Activated CD4-positive, alpha-beta memory T cell treated with anti-CD3 and anti-CD28 coated beads, Interleukin-2, amount 10 ng/mL, durations not matched to agents 7 days and 5 days (primary cell): ENCODE measurements at regions of chr14 and their contacts with region 1.

Region 1: GRCh38 chr14:55388160-55388559 is 23.5 kb downstream of the ATG14 start:
- DNase-seq: no peak
- H3K4me3 Mint-ChIP-seq: no peak overlapping the region
- H3K27ac Mint-ChIP-seq: no peak overlapping the region
- H3K4me1 Mint-ChIP-seq: peaks cover 37% of the 10 kb centered on the region
- H3K27me3 Mint-ChIP-seq: no peaks in the 10 kb centered on the region

Region 2: DNA sequence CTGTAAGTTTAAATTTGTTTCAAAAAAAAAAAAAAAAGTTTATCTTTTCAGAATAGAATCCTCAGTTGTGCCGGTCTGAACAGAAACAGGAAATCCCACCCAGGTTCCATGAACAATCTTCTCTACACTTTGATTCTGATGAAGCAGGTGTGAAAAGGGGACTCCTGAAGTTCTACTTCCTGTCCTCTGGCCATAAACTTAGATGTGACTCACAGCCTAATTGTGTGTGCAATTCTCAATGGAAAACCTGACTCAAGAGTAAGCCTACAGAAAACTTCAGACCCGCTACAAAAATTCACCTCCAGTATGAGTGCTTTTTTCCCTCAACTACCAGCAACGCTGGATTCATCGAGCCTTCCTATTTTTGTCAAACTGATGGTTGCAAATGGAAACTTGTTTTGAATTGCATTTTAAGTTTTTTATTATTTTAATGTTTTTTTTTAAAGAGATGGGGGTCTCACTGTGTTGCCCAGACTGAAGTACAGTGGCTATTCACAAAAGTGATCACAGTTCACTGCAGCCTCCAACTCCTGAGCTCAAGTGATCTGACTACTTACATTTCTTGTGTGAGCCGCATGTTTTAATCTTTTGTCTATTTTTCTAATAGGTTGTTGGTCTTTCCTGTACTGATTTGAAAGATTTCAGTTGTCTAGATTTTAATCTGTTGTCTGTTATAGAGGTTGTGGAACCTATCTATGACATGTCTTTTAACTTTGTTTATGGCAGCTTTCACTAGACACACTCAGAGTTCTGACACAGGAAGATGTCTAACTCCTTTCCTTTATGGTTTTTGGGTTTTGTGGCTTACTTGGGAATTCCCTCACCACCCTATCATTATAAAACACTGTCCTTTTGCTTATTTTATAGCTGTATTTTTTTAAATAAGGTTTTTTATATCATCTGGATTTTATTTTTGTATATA is 14.1 kb before region 1 on chr14:
- CTCF ChIA-PET with region 1: interaction called, 4 read pairs
- POLR2A ChIA-PET with region 1: interaction called, 15 read pairs
- DNase-seq: peak; percentile 25
- H3K4me3 Mint-ChIP-seq: no peak overlapping the region
- H3K27ac Mint-ChIP-seq: peak overlapping the region; percentile 58
- H3K4me1 Mint-ChIP-seq: peaks cover 22% of the 10 kb centered on the region
- H3K27me3 Mint-ChIP-seq: no peaks in the 10 kb centered on the region

Region 3: DNA sequence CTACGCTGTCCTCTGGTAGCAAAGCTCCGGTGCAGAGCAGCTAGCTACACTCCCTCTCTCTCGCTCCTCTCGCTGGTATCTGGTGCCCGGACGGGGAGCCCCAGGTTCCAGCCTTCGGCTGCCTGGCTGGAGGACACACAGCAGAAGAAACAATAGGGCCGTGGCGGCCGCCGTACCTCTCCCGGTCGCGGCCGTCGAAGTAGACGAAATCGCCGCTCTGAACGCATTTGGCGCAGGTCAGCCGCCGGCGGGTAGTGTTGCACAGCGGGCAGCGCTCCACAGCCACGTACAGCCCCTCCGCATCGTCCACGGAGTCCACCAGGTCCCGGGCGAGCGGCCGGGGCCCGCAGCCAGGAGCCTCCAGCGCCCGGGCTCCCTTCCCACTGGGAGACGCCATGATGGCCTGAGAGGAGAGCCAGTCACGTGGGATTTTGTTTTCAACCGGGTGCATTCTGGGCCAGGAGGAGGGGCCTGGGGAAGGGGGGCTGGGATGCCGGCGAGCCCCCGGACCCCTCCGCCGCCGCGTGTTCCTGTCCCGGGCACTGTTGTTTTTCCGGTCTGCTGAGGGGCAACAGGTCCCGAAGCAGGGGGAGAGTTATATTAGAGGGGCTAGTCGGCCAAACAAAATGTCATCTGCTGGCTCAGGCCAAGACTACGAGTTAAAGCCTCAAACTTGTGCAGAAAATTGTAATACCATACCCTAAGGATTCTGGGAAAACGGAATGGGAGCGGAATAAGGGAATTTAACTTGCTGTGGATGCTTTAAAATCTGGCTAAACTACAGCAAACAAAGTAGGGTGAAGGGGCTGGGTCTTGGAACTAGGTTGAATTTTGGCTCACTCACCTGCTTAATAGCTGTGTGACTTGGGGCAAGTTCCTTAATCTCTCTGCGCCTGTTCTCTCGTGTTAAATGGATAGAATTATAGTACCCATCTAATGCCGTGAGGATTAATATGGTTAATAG is 23.5 kb after region 1 on chr14 and contains the start of gene ATG14:
- CTCF ChIA-PET with region 1: no interaction called
- POLR2A ChIA-PET with region 1: interaction called, 12 read pairs
- DNase-seq: peak; percentile 81
- H3K4me3 Mint-ChIP-seq: peak within 1 kb of the TSS; percentile 83
- H3K27ac Mint-ChIP-seq: peak within 1 kb of the TSS; percentile 61
- H3K4me1 Mint-ChIP-seq: peaks cover 32% of the 10 kb centered on the region
- H3K27me3 Mint-ChIP-seq: peaks cover 2% of the 10 kb centered on the region
- total RNA-seq, gene ATG14: 5.5 TPM

Region 4: GRCh38 chr14:55556929-55557623 is 168.9 kb after region 1 on chr14:
- CTCF ChIA-PET with region 1: no interaction called
- POLR2A ChIA-PET with region 1: no interaction called
- DNase-seq: no peak
- H3K4me3 Mint-ChIP-seq: no peak overlapping the region
- H3K27ac Mint-ChIP-seq: no peak overlapping the region
- H3K4me1 Mint-ChIP-seq: peaks cover 4% of the 10 kb centered on the region
- H3K27me3 Mint-ChIP-seq: peaks cover 8% of the 10 kb centered on the region

Region 5: DNA sequence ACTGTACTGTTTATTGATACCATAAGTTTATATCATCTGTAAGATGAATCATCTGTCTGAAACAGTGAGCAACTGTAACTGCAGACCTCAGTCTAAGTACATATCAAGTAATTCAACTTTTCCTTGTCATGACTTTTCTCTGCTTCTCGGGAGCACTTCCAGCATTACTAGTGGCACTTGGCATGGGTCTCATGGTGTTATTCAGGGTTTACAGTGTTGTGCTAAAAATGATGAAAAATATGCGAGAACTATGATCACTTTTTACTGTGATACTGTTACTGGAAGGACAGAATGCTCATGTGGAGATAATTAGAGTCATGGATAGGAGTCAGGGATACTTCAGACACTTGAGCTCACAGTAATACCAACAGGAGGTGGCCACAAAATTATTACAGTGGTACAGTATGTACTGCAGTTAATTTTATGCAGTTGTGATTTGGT is 200.1 kb after region 1 on chr14:
- CTCF ChIA-PET with region 1: no interaction called
- POLR2A ChIA-PET with region 1: no interaction called
- DNase-seq: no peak
- H3K4me3 Mint-ChIP-seq: no peak overlapping the region
- H3K27ac Mint-ChIP-seq: no peak overlapping the region
- H3K4me1 Mint-ChIP-seq: peaks cover 29% of the 10 kb centered on the region
- H3K27me3 Mint-ChIP-seq: no peaks in the 10 kb centered on the region